ENCODE measurements at regions of chrX and their contacts with region 1.

Region 1: DNA sequence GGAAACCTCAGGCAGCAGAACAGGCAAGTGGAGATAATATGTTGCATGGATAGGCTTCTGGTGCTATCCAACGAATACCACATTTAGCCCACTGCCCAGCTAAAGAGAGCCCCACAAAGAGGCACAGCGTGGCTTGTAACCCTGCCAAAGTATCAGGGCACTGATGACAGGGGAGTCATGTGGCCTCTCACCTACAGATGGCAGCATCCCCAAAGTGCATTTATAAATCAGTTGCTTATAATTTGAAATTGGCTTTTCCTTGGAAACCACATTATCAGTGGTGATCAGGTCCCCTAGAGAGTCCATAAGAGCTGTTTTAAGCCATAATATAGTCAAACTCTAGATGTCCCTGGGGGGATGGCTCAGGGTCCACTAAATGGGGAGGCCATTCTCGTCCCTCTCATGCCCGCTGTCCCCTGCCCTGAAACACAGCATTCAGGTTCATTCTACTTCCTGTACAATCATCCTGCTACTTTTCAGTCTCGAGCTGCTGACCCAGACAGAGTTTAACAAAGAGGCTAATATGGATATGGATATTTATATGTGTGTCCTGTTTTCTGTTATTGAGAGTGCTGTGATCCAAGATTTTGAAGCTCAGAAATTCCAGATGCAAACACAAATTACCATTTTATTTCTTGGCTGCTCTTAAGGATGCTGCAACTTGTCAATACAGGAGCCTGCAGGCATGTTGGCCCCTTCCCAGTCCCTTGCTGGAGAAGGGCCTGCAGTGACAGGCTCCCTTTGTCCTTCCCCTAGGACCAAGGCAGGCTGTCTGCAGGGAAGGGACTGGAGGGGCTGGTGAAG is 28.5 kb downstream of the SRPX start:
- DNase-seq: no peak
- H3K4me3 ChIP-seq: no peak overlapping the region
- CTCF ChIP-seq: peak; percentile 33

Region 2: DNA sequence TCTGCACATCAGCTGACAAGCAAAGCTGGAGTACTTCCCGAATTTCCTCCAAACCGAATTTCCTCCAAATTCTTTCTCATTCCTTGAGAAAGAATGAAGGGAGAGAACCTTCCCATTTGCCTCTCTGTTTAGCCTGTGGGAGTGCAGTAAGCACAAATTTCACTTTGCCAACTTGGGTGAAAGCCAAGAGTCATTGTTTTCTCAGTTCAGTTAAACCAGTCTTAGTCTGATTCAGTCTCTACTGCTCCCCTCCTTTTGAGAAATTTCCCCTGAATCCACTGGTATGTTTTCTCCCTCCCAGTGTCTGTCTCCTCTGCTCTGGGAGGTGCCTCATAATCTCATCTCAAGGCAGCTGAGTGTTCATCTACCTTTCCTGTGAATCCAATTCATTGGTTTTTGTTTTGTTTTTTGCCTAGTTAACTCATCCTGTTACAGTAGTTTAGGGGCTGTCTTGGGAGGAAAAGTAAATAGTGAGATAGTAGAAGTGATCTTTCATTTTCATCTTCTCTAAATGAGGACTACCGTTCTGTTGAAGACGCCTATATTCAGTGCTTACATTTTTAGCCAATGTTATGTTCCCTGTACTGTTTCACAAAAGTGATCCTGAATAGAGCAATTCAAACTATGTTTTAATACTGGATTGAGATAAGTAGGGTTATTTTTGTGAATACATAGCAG is 136.9 kb before region 1 on chrX:
- CTCF ChIA-PET with region 1: no interaction called
- POLR2A ChIA-PET with region 1: no interaction called
- DNase-seq: no peak
- H3K4me3 ChIP-seq: no peak overlapping the region
- CTCF ChIP-seq: no peak

Region 3: GRCh38 chrX:38293741-38294140 is 101.5 kb after region 1 on chrX:
- CTCF ChIA-PET with region 1: interaction called, 27 read pairs
- POLR2A ChIA-PET with region 1: no interaction called
- DNase-seq: no peak
- H3K4me3 ChIP-seq: no peak overlapping the region
- CTCF ChIP-seq: peak; percentile 2